Caco-2 (cell line): ENCODE measurements at regions of chr3 and their contacts with region 1.

Region 1: GRCh38 chr3:72255791-72256559 is 471.0 kb upstream of the PROK2 start:
- DNase-seq: no peak
- H3K4me3 ChIP-seq: no peak overlapping the region
- H3K4me3 Mint-ChIP-seq: no peak overlapping the region
- H3K27ac Mint-ChIP-seq: no peak overlapping the region
- H3K4me1 ChIP-seq: no peaks in the 10 kb centered on the region
- H3K4me1 Mint-ChIP-seq: no peaks in the 10 kb centered on the region
- H3K27me3 ChIP-seq: no peaks in the 10 kb centered on the region
- H3K27me3 Mint-ChIP-seq: peaks cover 15% of the 10 kb centered on the region
- CTCF ChIP-seq: no peak

Region 2: DNA sequence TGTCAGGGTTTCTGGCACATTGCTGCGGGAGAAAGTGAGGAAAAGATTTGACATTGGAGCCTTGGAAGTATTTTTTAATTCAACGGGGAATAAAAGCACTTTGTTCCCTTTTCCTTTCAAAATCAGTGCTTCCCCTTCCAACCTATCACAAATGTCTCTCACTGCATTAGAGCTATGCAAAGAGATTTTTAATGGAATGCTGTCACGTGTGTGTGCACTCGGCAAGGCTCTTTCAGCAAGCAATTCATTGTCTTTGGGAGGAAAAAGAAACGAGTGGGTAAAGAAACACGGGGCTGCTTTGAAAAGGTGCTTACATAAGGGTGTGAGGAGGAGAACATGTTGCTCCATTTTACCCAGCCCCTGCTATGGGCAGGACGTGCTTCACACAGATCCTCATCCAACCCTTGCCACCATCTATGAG is 19.4 kb after region 1 on chr3:
- CTCF ChIA-PET with region 1: no interaction called
- POLR2A ChIA-PET with region 1: interaction called, 10 read pairs
- intact Hi-C with region 1: no loop called
- DNase-seq: no peak
- H3K4me3 ChIP-seq: no peak overlapping the region
- H3K4me3 Mint-ChIP-seq: no peak overlapping the region
- H3K27ac Mint-ChIP-seq: no peak overlapping the region
- H3K4me1 ChIP-seq: peaks cover 5% of the 10 kb centered on the region
- H3K4me1 Mint-ChIP-seq: peaks cover 7% of the 10 kb centered on the region
- H3K27me3 ChIP-seq: no peaks in the 10 kb centered on the region
- H3K27me3 Mint-ChIP-seq: peaks cover 5% of the 10 kb centered on the region
- CTCF ChIP-seq: no peak